ENCODE measurements at regions of chr19 and their contacts with region 1.

Region 1: GRCh38 chr19:40813182-40813958 is 14.4 kb downstream of the EGLN2 start:
- DNase-seq: no peak
- ATAC-seq: no peak
- H3K4me3 Mint-ChIP-seq: no peak overlapping the region
- H3K27ac Mint-ChIP-seq: no peak overlapping the region
- H3K4me1 Mint-ChIP-seq: peaks cover 29% of the 10 kb centered on the region
- H3K27me3 Mint-ChIP-seq: peaks cover 31% of the 10 kb centered on the region

Region 2: DNA sequence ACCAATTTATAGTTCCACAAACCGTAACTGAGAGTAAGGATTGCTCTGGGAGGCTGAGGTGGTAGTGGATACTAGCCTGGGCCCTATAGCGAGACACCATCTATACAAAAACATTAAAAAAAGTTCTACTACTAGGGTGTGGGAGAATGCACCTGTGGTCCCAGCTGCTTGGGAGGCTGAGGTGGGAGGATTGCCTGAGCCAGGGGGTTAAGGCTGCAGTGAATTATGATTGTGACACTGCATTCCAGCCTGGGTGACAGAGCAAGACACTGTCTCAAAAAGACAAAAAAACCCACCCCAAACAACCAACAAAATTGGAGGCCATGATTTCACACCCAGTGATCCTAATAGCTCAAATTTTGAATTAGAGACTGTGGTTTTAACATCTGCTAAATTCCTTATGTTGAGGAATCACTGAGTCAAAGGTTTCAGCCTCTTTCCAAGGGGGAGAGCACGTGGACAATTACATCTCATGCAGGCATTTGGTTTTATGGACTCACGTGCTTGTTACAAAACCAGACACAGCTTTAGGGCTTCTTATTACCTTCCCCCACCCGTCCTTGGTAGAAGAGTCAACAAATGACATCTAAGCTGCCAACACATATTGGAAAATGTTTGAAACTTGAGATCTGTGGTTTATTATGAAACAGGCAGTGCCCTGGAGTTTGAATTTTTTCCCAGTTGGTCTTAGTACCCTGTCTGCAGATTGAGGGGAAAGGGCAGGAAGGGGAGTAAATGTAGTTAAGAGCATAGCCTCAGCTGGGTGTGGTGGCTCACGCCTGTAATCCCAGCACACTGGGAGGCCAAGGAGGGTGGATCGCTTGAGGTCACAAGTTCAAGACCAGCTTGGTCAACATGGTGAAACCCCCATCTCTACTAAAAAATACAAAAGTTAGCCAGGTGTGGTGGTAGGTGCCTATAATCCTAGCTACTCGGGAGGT is 18.4 kb after region 1 on chr19:
- CTCF ChIA-PET with region 1: interaction called, 13 read pairs
- DNase-seq: peak; percentile 18
- ATAC-seq: no peak
- H3K4me3 Mint-ChIP-seq: no peak overlapping the region
- H3K27ac Mint-ChIP-seq: no peak overlapping the region
- H3K4me1 Mint-ChIP-seq: peaks cover 14% of the 10 kb centered on the region
- H3K27me3 Mint-ChIP-seq: peaks cover 4% of the 10 kb centered on the region